HepG2 (cell line): ENCODE measurements at regions of chr14 and their contacts with region 1.

Region 1: GRCh38 chr14:30375296-30375892 is 183.6 kb upstream of the G2E3 start:
- DNase-seq: peak; percentile 76
- ATAC-seq: peak; percentile 100
- H3K4me3 ChIP-seq: no peak overlapping the region
- H3K27ac ChIP-seq: no peak overlapping the region
- H3K4me1 ChIP-seq: no peaks in the 10 kb centered on the region
- H3K27me3 ChIP-seq: no peaks in the 10 kb centered on the region
- CTCF ChIP-seq: peak; percentile 96
- EP300 ChIP-seq: no peak
- POLR2A ChIP-seq: no peak
- RAD21 ChIP-seq: peak; percentile 80

Region 2: GRCh38 chr14:30260833-30261607 is 114.4 kb before region 1 on chr14:
- CTCF ChIA-PET with region 1: no interaction called
- POLR2A ChIA-PET with region 1: no interaction called
- in situ Hi-C with region 1: no loop called
- intact Hi-C with region 1: no loop called
- DNase-seq: no peak
- ATAC-seq: no peak
- H3K4me3 ChIP-seq: no peak overlapping the region
- H3K27ac ChIP-seq: no peak overlapping the region
- H3K4me1 ChIP-seq: no peaks in the 10 kb centered on the region
- H3K27me3 ChIP-seq: no peaks in the 10 kb centered on the region
- CTCF ChIP-seq: no peak
- EP300 ChIP-seq: no peak
- POLR2A ChIP-seq: no peak
- RAD21 ChIP-seq: no peak

Region 3: GRCh38 chr14:30362369-30363218 is 12.8 kb before region 1 on chr14:
- CTCF ChIA-PET with region 1: no interaction called
- POLR2A ChIA-PET with region 1: no interaction called
- in situ Hi-C with region 1: no loop called
- intact Hi-C with region 1: no loop called
- DNase-seq: no peak
- ATAC-seq: peak; percentile 78
- H3K4me3 ChIP-seq: no peak overlapping the region
- H3K27ac ChIP-seq: no peak overlapping the region
- H3K4me1 ChIP-seq: no peaks in the 10 kb centered on the region
- H3K27me3 ChIP-seq: peaks cover 0 to 12% of the 10 kb centered on the region in 2 experiments; a peak in 1 of 5 replicates
- CTCF ChIP-seq: no peak
- EP300 ChIP-seq: no peak
- POLR2A ChIP-seq: no peak
- RAD21 ChIP-seq: no peak

Region 4: GRCh38 chr14:30450631-30451545 is 75.5 kb after region 1 on chr14:
- CTCF ChIA-PET with region 1: no interaction called
- POLR2A ChIA-PET with region 1: no interaction called
- in situ Hi-C with region 1: no loop called
- intact Hi-C with region 1: no loop called
- DNase-seq: no peak
- ATAC-seq: peak; percentile 54
- H3K4me3 ChIP-seq: no peak overlapping the region
- H3K27ac ChIP-seq: no peak overlapping the region
- H3K4me1 ChIP-seq: no peaks in the 10 kb centered on the region
- H3K27me3 ChIP-seq: no peaks in the 10 kb centered on the region
- CTCF ChIP-seq: no peak
- EP300 ChIP-seq: no peak
- POLR2A ChIP-seq: no peak
- RAD21 ChIP-seq: no peak

Region 5: GRCh38 chr14:30521899-30522736 is 146.7 kb after region 1 on chr14:
- CTCF ChIA-PET with region 1: interaction called, 17 read pairs
- POLR2A ChIA-PET with region 1: no interaction called
- in situ Hi-C with region 1: loop called (anchors 10 kb)
- intact Hi-C with region 1: loop called (anchors 1 kb)
- DNase-seq: peak; percentile 57
- ATAC-seq: peak; percentile 70
- H3K4me3 ChIP-seq: no peak overlapping the region
- H3K27ac ChIP-seq: no peak overlapping the region
- H3K4me1 ChIP-seq: no peaks in the 10 kb centered on the region
- H3K27me3 ChIP-seq: 0 out of 5 replicates have a peak, but pooled peaks cover 0 to 2% of the 10 kb centered on the region in 2 experiments
- CTCF ChIP-seq: peak; percentile 78
- EP300 ChIP-seq: no peak
- POLR2A ChIP-seq: no peak
- RAD21 ChIP-seq: no peak

Region 6: GRCh38 chr14:30610787-30611343 is 235.5 kb after region 1 on chr14:
- CTCF ChIA-PET with region 1: interaction called, 7 read pairs
- POLR2A ChIA-PET with region 1: no interaction called
- in situ Hi-C with region 1: no loop called
- intact Hi-C with region 1: loop called (anchors 1 kb)
- DNase-seq: peak; percentile 75
- ATAC-seq: peak; percentile 75
- H3K4me3 ChIP-seq: no peak overlapping the region
- H3K27ac ChIP-seq: no peak overlapping the region
- H3K4me1 ChIP-seq: no peaks in the 10 kb centered on the region
- H3K27me3 ChIP-seq: no peaks in the 10 kb centered on the region
- CTCF ChIP-seq: peak; percentile 76
- EP300 ChIP-seq: 0 out of 4 replicates have a peak, but pooled peaks of 1 of the 2 experiments have one; percentile 5
- POLR2A ChIP-seq: no peak
- RAD21 ChIP-seq: no peak